Common myeloid progenitor, CD34-positive (primary cell): ENCODE measurements at regions of chr6 and their contacts with region 1.

Region 1: DNA sequence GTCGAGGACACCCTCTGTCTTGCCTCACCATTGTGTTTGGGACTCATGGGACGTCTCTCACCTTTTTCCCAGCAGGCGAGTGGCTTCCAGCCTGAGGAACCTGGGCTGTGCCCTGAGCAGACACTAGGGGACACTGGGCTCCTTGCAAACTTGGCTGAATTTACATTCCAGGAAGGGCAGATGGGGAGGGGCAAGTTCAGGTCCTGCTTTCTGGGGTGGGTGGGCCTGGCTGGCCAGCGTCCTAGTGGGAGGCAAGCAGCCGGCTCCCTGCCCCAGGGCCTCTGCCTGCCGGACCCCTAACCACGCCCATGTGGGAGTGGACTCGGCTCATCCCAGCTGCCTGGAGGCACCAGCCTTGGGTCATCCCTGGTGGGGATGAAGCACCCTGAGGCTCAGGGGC is 48.2 kb upstream of the MLN start:
- DNase-seq: peak; percentile 45 to 59 (median 57)
- H3K4me3 ChIP-seq: no peak overlapping the region
- H3K27ac ChIP-seq: no peak overlapping the region
- H3K4me1 ChIP-seq: peaks cover 0 to 28% (median 21%) of the 10 kb centered on the region in 4 experiments
- H3K27me3 ChIP-seq: peaks cover 0 to 41% (median 23%) of the 10 kb centered on the region in 5 experiments

Region 2: DNA sequence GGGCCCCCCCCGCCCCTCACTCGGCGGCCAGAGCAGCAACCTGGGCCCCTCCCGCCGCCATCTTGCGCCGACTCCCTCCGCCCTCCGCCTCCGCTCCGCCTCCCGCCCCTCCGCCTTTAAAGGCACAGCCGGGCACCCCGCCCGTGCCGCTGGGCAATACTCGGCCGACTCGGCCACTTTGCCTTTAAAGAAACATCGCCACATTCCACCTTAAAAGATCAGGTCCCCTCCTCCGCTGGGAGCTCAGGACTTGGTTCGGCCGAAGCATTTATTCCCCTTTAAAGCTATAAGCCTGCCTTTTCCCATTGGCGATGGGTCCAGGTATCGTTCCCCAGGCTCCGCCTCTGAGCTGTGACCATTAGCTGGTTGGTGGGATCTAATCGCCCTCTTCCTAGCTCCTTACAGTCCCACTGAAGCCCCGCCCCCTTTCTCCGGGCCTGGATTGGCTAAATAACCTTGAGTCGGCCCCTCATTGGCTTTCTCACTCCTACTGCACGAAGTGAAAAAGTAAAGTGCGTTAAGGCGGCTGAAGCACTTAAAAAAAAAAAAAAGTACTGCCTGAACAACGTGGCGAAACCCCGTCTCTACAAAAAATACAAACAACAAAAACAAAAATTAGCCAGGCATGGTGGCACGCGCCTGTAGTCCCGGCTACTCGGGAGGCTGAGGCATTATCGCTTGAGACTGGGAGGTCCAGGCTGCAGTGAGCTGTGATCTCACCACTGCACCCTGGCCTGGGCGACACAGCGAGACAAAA is 534.1 kb before region 1 on chr6 and contains the start of gene ZBTB22:
- CTCF ChIA-PET with region 1: no interaction called
- POLR2A ChIA-PET with region 1: no interaction called
- DNase-seq: peak; percentile 99 to 100 (median 99)
- H3K4me3 ChIP-seq: peak within 1 kb of the TSS; percentile 72 to 91 (median 84)
- H3K27ac ChIP-seq: peak within 1 kb of the TSS; percentile 50 to 84
- H3K4me1 ChIP-seq: peaks cover 3 to 73% (median 46%) of the 10 kb centered on the region in 4 experiments
- H3K27me3 ChIP-seq: no peaks in the 10 kb centered on the region

Region 3: GRCh38 chr6:33513213-33513612 is 338.7 kb before region 1 on chr6:
- CTCF ChIA-PET with region 1: no interaction called
- POLR2A ChIA-PET with region 1: no interaction called
- DNase-seq: peak in 1 of 3 donors; percentile 11
- H3K4me3 ChIP-seq: no peak overlapping the region
- H3K27ac ChIP-seq: no peak overlapping the region
- H3K4me1 ChIP-seq: peaks cover 2 to 9% (median 8%) of the 10 kb centered on the region in 4 experiments
- H3K27me3 ChIP-seq: peaks cover 0 to 4% (median 0%) of the 10 kb centered on the region in 5 experiments

Region 4: GRCh38 chr6:33840048-33840926 is 11.7 kb before region 1 on chr6:
- CTCF ChIA-PET with region 1: interaction called, 14 read pairs
- POLR2A ChIA-PET with region 1: no interaction called
- DNase-seq: peak; percentile 91 to 97 (median 96)
- H3K4me3 ChIP-seq: peak overlapping the region in 2 of 7 experiments; percentile 26 to 28
- H3K27ac ChIP-seq: peak overlapping the region in 1 of 2 experiments; percentile 44
- H3K4me1 ChIP-seq: peaks cover 7 to 38% (median 36%) of the 10 kb centered on the region in 4 experiments
- H3K27me3 ChIP-seq: no peaks in the 10 kb centered on the region

Region 5: GRCh38 chr6:33868141-33868540 is 16.2 kb after region 1 on chr6:
- CTCF ChIA-PET with region 1: no interaction called
- POLR2A ChIA-PET with region 1: no interaction called
- DNase-seq: no peak
- H3K4me3 ChIP-seq: no peak overlapping the region
- H3K27ac ChIP-seq: no peak overlapping the region
- H3K4me1 ChIP-seq: no peaks in the 10 kb centered on the region
- H3K27me3 ChIP-seq: peaks cover 0 to 14% (median 5%) of the 10 kb centered on the region in 5 experiments

Region 6: DNA sequence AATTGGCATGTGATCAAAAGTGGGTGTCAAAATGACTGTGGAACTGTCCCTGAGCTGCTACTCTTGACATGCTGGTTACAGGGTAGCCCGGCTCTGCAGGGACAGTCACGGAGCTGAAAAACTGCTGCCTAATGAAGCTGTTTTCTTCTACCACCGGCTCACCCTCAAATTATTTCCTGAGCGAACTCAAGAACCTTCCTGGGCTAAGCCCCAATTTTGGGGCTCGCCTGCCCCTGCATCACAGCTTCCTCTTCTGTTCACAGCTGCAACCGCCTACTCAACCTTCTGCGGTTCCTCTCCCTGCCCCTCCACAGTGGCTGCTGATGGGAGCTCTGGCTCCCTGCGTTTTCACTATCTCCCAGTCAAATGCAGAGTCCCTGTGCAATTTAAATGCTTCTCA is 62.7 kb after region 1 on chr6:
- CTCF ChIA-PET with region 1: interaction called, 17 read pairs
- POLR2A ChIA-PET with region 1: no interaction called
- DNase-seq: peak; percentile 83 to 94 (median 92)
- H3K4me3 ChIP-seq: peak overlapping the region in 2 of 7 experiments; percentile 4 to 36
- H3K27ac ChIP-seq: no peak overlapping the region
- H3K4me1 ChIP-seq: peaks cover 12 to 31% (median 24%) of the 10 kb centered on the region in 4 experiments
- H3K27me3 ChIP-seq: peaks cover 0 to 4% (median 0%) of the 10 kb centered on the region in 5 experiments

Region 7: DNA sequence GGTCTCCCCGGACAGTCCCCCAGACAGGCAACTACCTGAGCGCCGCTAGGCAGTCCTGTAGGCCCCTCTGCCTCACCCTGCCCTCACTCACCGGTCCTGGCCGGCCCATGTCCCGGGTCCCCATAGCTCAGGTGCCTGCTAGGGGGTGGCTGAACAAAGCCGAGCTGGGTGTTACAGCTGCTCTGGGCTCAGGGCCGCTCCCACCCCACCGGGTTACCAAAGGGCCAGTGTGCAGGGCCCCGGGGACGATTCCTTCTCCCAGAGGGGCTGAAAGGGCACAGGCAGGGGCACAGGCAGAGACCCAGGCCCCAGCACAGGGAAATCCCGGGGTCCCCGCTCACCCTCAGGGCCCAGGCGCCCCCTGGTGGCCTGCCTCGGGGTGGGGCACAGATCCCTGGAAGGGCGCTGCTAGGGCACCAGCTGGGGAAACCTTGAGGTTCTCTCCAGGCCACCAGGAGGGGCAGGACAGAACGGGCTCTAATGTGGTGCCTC is 175.5 kb after region 1 on chr6:
- CTCF ChIA-PET with region 1: interaction called, 36 read pairs
- POLR2A ChIA-PET with region 1: no interaction called
- DNase-seq: peak; percentile 41 to 59 (median 56)
- H3K4me3 ChIP-seq: no peak overlapping the region
- H3K27ac ChIP-seq: no peak overlapping the region
- H3K4me1 ChIP-seq: peaks cover 0 to 8% (median 3%) of the 10 kb centered on the region in 4 experiments
- H3K27me3 ChIP-seq: peaks cover 0 to 8% (median 0%) of the 10 kb centered on the region in 5 experiments